ENCODE measurements at regions of chr5 and their contacts with region 1.

Region 1: DNA sequence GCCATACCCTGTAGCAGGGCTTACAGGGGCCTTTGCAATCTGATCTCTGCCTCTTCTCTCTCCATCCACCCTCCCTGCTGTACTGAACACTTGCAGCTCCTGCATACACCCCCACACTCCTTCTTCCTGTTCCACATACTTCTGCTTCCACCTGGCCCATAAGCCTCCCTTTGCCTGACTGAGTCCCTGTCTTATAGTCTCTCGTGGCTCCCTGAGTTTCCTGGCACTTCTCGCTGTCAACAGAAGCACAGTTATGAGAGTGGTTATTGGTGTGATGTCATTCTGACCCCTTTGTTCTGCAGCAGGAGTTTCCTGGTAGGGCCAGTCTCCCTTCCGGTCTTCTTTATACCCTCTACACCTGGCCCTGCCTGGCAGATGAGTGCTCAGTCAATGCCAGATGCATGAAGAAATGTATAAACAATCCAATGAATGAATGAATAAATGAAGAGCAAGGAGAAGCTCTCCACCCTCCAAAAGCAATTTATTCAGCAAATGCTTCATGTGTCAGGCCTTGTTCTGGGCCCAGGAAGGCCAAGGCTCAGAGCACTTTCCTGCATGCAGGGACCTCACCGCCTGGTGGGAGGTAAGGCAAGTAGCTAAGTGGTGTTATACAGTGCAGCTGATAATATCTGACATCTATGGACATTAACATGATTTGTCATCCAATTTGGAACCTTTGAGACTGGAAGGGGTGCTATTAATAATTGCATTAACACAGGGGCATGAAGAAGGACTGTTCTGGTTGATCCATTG is 20.5 kb upstream of the CSF1R start:
- DNase-seq: no peak
- ATAC-seq: no peak
- H3K4me3 ChIP-seq: no peak overlapping the region
- H3K27ac ChIP-seq: no peak overlapping the region
- H3K4me1 ChIP-seq: peaks cover 0 to 42% (median 0%) of the 10 kb centered on the region in 12 donors
- H3K27me3 ChIP-seq: no peaks in the 10 kb centered on the region
- CTCF ChIP-seq: no peak
- POLR2A ChIP-seq: no peak

Region 2: GRCh38 chr5:150073086-150073625 is 33.7 kb before region 1 on chr5:
- intact Hi-C with region 1: loop called in 1 of 10 experiments (anchors 5 kb)
- DNase-seq: peak in 2 of 5 donors; percentile 3 to 12
- ATAC-seq: no peak
- H3K4me3 ChIP-seq: no peak overlapping the region
- H3K27ac ChIP-seq: no peak overlapping the region
- H3K4me1 ChIP-seq: peaks cover 0 to 14% (median 0%) of the 10 kb centered on the region in 12 donors
- H3K27me3 ChIP-seq: no peaks in the 10 kb centered on the region
- CTCF ChIP-seq: no peak
- POLR2A ChIP-seq: no peak

Region 3: DNA sequence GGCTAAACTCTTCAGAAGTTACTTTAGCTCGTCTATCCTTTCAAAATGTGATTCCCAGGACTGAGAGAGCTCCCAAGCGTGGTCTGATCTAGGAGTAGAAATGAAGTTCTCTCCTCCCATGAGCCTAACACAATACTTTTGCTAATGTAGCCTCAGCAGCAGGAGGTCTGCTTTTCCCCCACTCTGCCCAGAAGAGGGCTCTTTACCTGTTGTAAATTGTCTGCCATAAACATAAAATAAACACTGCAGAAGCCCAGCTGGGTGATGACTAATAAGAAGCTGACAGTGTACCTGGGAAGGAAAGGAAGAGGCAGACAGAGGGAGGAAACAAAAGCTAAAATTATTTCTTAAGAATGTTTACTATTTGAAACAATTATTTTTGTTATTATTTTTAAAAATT is 1181.3 kb after region 1 on chr5:
- intact Hi-C with region 1: no loop called
- DNase-seq: no peak
- ATAC-seq: no peak
- H3K4me3 ChIP-seq: no peak overlapping the region
- H3K27ac ChIP-seq: no peak overlapping the region
- H3K4me1 ChIP-seq: no peaks in the 10 kb centered on the region
- H3K27me3 ChIP-seq: no peaks in the 10 kb centered on the region
- CTCF ChIP-seq: no peak
- POLR2A ChIP-seq: no peak